CD14-positive monocyte (primary cell): ENCODE measurements at regions of chr11 and their contacts with region 1.

Region 1: GRCh38 chr11:114262681-114263512 is 33.3 kb upstream of the NNMT start:
- DNase-seq: peak; percentile 13 to 45 (median 44)
- H3K4me3 ChIP-seq: no peak overlapping the region
- H3K4me3 Mint-ChIP-seq: no peak overlapping the region
- H3K27ac ChIP-seq: no peak overlapping the region
- H3K27ac Mint-ChIP-seq: no peak overlapping the region
- H3K4me1 ChIP-seq: peaks cover 28% of the 10 kb centered on the region in 2 donors
- H3K4me1 Mint-ChIP-seq: peaks cover 22% of the 10 kb centered on the region
- H3K27me3 ChIP-seq: peaks cover 0 to 4% of the 10 kb centered on the region in 2 donors
- H3K27me3 Mint-ChIP-seq: peaks cover 0 to 4% (median 0%) of the 10 kb centered on the region in 3 donors
- CTCF ChIP-seq: peak; percentile 55

Region 2: GRCh38 chr11:113896156-113896879 is 366.6 kb before region 1 on chr11:
- intact Hi-C with region 1: loop called (anchors 2 to 5 kb)
- DNase-seq: peak; percentile 12 to 45 (median 36)
- H3K4me3 ChIP-seq: no peak overlapping the region
- H3K4me3 Mint-ChIP-seq: no peak overlapping the region
- H3K27ac ChIP-seq: no peak overlapping the region
- H3K27ac Mint-ChIP-seq: no peak overlapping the region
- H3K4me1 ChIP-seq: no peaks in the 10 kb centered on the region
- H3K4me1 Mint-ChIP-seq: peaks cover 5% of the 10 kb centered on the region
- H3K27me3 ChIP-seq: no peaks in the 10 kb centered on the region
- H3K27me3 Mint-ChIP-seq: peaks cover 2 to 7% (median 4%) of the 10 kb centered on the region in 3 donors
- CTCF ChIP-seq: peak; percentile 70

Region 3: DNA sequence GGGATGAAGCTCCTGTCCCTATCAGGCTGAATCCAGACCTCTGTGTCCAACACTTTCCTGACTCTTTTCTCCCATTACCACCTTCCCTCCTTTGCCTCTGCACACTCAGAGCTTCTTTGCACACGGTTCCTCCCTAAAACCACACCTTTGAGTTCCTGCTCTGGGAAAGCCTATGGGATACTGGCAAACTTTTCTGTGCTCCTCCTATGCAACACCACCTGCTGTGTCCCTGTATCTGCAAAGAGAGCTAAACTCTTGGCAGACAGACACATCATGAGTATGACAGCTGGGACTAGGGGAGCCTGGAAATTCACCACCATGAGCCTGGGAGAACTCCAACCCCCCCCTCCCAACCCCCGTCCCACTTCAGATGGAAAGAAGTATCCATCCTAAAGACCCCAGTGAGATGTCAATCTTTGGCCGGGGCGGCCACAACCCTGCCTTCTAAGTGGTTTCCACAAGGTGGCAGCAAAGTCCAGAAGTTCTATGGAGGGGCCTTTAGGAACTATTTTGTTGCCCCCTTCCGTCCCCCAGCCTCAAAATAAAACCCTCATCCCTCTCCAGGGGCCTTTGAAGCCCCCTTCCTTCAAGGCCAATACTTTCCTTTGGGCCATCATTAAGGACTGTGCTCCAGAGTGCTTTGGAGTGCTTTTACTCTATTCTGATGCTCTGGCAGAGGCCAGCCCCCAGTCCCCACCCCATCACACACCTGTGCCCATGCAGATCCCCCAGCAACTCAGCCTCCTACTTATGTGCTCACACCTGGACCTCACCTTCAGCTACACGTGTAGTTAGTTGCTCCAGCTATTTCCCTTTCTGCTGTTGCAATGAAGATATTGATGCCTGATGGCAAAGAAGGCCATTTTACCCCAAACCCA is 268.6 kb before region 1 on chr11:
- intact Hi-C with region 1: loop called (anchors 2 kb)
- DNase-seq: peak in 2 of 3 donors; percentile 11 to 16
- H3K4me3 ChIP-seq: no peak overlapping the region
- H3K4me3 Mint-ChIP-seq: no peak overlapping the region
- H3K27ac ChIP-seq: no peak overlapping the region
- H3K27ac Mint-ChIP-seq: peak overlapping the region in 1 of 7 donors; percentile 56
- H3K4me1 ChIP-seq: no peaks in the 10 kb centered on the region
- H3K4me1 Mint-ChIP-seq: no peaks in the 10 kb centered on the region
- H3K27me3 ChIP-seq: peaks cover 0 to 5% of the 10 kb centered on the region in 2 donors
- H3K27me3 Mint-ChIP-seq: peaks cover 9 to 18% (median 18%) of the 10 kb centered on the region in 3 donors
- CTCF ChIP-seq: peak; percentile 79

Region 4: GRCh38 chr11:114036156-114036811 is 226.6 kb before region 1 on chr11:
- intact Hi-C with region 1: loop called (anchors 1 to 2 kb)
- DNase-seq: peak; percentile 61 to 72 (median 69)
- H3K4me3 ChIP-seq: peak overlapping the region in 2 of 3 experiments; percentile 13 to 68
- H3K4me3 Mint-ChIP-seq: peak overlapping the region; percentile 31 to 71
- H3K27ac ChIP-seq: no peak overlapping the region
- H3K27ac Mint-ChIP-seq: no peak overlapping the region
- H3K4me1 ChIP-seq: peaks cover 21 to 24% of the 10 kb centered on the region in 2 donors
- H3K4me1 Mint-ChIP-seq: peaks cover 25% of the 10 kb centered on the region
- H3K27me3 ChIP-seq: peaks cover 0 to 4% of the 10 kb centered on the region in 2 donors
- H3K27me3 Mint-ChIP-seq: peaks cover 8 to 11% (median 9%) of the 10 kb centered on the region in 3 donors
- CTCF ChIP-seq: peak; percentile 89